ENCODE measurements at regions of chr1 and their contacts with region 1.

Region 1: DNA sequence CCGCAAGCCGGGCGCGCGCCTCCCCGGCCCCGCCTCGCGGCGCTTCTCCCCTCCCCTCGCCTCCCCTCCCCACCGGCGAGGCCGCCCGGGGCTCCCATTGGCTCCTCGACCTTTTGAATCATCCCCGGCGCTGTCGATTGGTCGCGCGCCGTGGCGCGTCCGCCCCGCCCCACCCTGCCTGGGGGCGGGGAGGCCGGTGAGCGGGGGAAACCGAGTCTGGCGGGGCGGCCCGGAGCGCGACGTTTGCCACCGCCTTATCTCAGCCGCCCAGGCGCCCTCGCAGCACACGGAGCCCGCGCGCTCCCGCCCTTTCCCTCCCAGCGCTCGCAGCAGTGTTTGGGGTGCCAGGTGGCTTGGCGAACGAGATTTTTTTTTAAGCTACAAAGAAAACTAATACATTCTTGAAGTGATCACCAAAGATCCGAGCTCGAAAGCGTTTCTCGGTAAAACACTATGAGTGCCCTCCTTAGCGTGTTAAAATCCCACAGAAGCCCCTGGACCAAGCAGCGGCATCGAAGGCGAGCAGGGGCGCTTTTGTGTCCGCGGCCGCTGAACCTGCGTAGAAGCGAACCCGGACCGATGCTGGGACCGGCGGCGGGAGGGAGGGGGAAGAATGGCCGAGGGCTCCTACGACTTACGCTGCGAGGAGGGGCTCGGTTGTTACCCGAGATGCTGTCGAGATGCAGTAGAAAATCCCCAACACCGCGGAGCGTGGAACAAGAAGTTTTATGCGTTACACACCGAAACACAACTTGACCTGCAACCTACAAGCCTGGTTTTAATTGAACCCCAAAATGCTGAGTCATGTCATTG is 436 bp upstream of the LBR start:
- DNase-seq: peak; percentile 80 to 96 (median 91)
- ATAC-seq: peak; percentile 92
- H3K4me3 ChIP-seq: peak overlapping the region; percentile 80 to 89
- H3K4me3 Mint-ChIP-seq: peak overlapping the region; percentile 93
- H3K27ac ChIP-seq: peak overlapping the region; percentile 69 to 70
- H3K27ac Mint-ChIP-seq: peak overlapping the region; percentile 91
- H3K4me1 ChIP-seq: peaks cover 39% of the 10 kb centered on the region
- H3K4me1 Mint-ChIP-seq: peaks cover 44% of the 10 kb centered on the region
- H3K27me3 ChIP-seq: no peaks in the 10 kb centered on the region
- H3K27me3 Mint-ChIP-seq: no peaks in the 10 kb centered on the region
- CTCF ChIP-seq: no peak

Region 2: DNA sequence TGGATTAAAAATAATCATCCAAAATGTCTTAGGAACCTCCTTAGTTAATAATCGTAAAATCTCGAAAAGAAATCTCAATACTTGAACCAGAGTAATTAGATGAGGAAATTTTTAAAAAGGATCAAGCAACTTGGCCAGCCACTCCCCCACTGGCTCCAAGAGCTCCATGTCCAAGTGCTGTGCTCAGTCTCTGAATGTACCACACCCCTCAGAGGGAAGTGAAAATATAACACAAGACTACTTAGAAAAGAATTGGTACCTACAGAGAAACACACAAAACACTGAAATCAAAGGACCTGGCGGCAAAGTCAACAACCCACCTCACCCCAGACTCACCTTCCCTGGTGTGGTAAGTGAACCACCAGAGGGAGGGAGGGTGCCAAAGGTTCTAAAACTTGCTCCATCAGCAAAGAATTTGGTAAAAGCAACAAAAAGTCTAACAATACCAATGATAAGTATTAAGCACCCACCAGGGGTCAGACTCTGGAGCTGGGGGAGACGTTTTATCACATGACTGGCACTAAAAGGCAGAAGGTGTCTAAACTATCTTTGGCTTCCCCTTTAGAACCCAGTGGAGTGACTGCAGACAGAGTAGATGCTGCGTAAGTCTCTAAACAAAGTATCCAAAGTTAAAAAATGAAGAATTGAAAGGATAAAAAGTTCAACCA is 14.4 kb before region 1 on chr1:
- CTCF ChIA-PET with region 1: interaction called, 3 read pairs
- POLR2A ChIA-PET with region 1: interaction called, 6 read pairs
- intact Hi-C with region 1: loop called in 1 of 2 experiments (anchors 2 kb)
- DNase-seq: peak in 2 of 9 experiments; percentile 23 to 38
- ATAC-seq: no peak
- H3K4me3 ChIP-seq: no peak overlapping the region
- H3K4me3 Mint-ChIP-seq: no peak overlapping the region
- H3K27ac ChIP-seq: no peak overlapping the region
- H3K27ac Mint-ChIP-seq: no peak overlapping the region
- H3K4me1 ChIP-seq: no peaks in the 10 kb centered on the region
- H3K4me1 Mint-ChIP-seq: peaks cover 24% of the 10 kb centered on the region
- H3K27me3 ChIP-seq: no peaks in the 10 kb centered on the region
- H3K27me3 Mint-ChIP-seq: no peaks in the 10 kb centered on the region
- CTCF ChIP-seq: no peak

Region 3: DNA sequence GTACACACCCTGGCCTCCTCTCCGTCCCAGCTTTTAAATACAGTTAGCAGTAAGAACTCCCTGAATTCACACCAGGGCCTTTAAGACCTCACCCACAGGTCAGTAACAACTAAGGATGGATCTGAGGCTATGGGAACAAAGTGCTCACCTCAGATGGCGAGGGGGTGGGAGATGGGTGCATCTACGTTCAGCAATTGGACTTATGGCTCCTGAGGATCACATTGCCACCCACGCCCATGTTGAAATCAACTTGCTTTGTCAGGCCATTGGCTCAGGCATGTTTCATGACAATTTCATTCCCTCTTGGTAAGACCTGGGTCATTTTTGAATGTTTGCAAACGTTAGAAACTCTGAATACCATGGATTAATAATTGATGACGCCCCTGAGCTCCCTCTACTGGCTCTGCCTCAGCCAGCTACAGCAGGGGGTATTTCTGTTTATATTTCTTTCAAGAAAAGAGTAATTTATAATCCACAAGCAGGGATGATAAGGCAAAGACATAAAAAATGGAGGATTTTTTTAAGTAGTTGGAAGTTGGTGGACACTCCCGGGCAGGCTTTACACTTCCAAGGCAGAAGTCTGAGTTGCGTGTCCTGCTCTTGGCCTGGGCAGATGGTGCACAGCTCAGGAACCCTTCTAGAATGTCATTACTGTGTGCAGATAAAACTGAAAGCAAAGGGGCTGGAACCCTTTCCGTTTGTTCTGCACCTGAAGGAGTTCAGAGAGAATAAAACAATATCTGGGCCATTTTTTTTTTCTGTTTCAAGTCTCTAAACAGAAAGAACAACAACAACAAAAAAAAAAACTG is 13.2 kb after region 1 on chr1:
- CTCF ChIA-PET with region 1: interaction called, 20 read pairs
- POLR2A ChIA-PET with region 1: interaction called, 111 read pairs
- intact Hi-C with region 1: loop called (anchors 1 kb)
- DNase-seq: no peak
- ATAC-seq: no peak
- H3K4me3 ChIP-seq: peak overlapping the region in 1 of 2 experiments; percentile 14
- H3K4me3 Mint-ChIP-seq: peak overlapping the region; percentile 61
- H3K27ac ChIP-seq: peak overlapping the region in 1 of 2 experiments; percentile 51
- H3K27ac Mint-ChIP-seq: peak overlapping the region; percentile 79
- H3K4me1 ChIP-seq: peaks cover 51% of the 10 kb centered on the region
- H3K4me1 Mint-ChIP-seq: peaks cover 53% of the 10 kb centered on the region
- H3K27me3 ChIP-seq: no peaks in the 10 kb centered on the region
- H3K27me3 Mint-ChIP-seq: no peaks in the 10 kb centered on the region
- CTCF ChIP-seq: no peak

Region 4: GRCh38 chr1:225652729-225653462 is 224.6 kb after region 1 on chr1 and contains the start of gene ENAH:
- CTCF ChIA-PET with region 1: no interaction called
- POLR2A ChIA-PET with region 1: no interaction called
- intact Hi-C with region 1: no loop called
- DNase-seq: peak in 7 of 9 experiments; percentile 16 to 56 (median 42)
- ATAC-seq: peak; percentile 65
- H3K4me3 ChIP-seq: peak within 1 kb of the TSS; percentile 55 to 62
- H3K4me3 Mint-ChIP-seq: peak within 1 kb of the TSS; percentile 88
- H3K27ac ChIP-seq: no peak within 1 kb of the TSS
- H3K27ac Mint-ChIP-seq: no peak within 1 kb of the TSS
- H3K4me1 ChIP-seq: peaks cover 11% of the 10 kb centered on the region
- H3K4me1 Mint-ChIP-seq: peaks cover 14% of the 10 kb centered on the region
- H3K27me3 ChIP-seq: peaks cover 11 to 22% of the 10 kb centered on the region in 2 experiments
- H3K27me3 Mint-ChIP-seq: peaks cover 33% of the 10 kb centered on the region
- CTCF ChIP-seq: no peak
- total RNA-seq, gene ENAH: 0.08 TPM in 1 of 2 experiments, not detected in the other